ENCODE measurements at regions of chr7 and their contacts with region 1.

Region 1: DNA sequence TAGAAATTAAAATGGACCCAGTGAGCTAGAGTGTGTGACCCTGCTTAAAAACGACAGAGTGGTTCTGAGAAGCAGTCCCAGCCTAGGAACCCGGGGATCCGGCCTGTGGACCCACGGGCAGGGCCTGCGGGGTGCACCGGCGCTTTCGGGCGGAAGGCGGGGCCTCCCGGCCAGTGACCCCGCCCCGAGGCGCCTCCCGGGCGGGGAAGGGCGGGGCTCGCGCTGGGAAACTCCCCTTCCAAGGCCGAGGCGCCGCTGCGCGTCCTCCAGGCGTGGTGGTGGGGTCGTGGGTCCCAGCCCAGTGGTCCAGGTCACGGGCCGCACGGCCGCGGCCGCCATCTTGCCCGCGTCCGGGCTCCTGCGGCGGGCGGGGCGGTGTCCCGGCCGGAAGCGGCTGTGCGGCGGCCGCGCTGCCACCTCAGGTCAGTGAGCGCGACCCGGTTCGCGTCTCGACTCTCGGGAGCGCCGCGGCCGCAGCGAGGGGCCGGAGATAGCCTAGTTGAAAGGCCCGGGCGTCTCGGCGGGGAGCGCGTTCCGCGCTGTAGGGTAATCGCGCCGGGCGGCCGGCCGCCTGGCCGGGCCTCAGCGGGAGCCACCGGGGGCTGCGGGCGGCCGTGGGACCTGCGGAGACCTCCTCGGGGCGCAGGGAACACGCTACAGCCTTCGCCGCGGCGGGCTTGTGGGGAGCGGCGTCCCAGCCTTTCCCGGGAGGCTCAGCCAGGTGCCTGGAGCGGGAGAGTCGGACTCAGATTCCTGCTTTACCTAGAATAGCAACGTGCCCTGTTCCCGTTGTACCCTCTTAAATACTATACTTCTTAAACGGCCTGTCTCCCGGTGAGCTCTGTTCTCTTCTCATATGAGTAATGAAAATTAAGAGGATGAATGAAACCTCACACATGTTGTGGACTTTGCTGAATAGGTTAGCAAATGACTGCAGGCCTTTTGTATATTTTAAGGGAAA is at the start of gene MIOS:
- DNase-seq: peak; percentile 85
- H3K4me3 Mint-ChIP-seq: peak within 1 kb of the TSS; percentile 81
- H3K27ac Mint-ChIP-seq: peak within 1 kb of the TSS; percentile 75
- H3K4me1 Mint-ChIP-seq: peaks cover 29% of the 10 kb centered on the region
- H3K27me3 Mint-ChIP-seq: no peaks in the 10 kb centered on the region
- total RNA-seq, gene MIOS: 37.2 to 37.7 TPM

Region 2: DNA sequence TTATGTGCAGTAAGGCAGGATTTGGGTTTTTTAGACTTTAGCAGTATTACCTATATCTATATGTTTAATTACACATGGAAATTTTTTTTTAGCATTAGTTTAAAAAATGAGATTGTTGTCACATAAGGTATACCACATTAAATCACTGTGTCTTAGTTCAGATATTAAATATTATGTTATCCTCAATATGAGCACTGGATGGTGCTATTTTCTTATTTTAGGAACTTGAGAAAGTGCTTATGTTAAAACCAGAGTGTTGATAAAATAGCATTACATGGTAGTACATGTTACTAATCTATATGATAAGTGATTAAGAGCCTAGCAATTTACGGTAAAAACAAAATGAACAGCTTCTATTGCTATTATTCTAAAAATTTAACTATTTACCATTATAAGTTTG is 28.5 kb after region 1 on chr7:
- CTCF ChIA-PET with region 1: no interaction called
- POLR2A ChIA-PET with region 1: no interaction called
- intact Hi-C with region 1: loop called (anchors 1 kb)
- DNase-seq: no peak
- H3K4me3 Mint-ChIP-seq: no peak overlapping the region
- H3K27ac Mint-ChIP-seq: no peak overlapping the region
- H3K4me1 Mint-ChIP-seq: no peaks in the 10 kb centered on the region
- H3K27me3 Mint-ChIP-seq: no peaks in the 10 kb centered on the region

Region 3: DNA sequence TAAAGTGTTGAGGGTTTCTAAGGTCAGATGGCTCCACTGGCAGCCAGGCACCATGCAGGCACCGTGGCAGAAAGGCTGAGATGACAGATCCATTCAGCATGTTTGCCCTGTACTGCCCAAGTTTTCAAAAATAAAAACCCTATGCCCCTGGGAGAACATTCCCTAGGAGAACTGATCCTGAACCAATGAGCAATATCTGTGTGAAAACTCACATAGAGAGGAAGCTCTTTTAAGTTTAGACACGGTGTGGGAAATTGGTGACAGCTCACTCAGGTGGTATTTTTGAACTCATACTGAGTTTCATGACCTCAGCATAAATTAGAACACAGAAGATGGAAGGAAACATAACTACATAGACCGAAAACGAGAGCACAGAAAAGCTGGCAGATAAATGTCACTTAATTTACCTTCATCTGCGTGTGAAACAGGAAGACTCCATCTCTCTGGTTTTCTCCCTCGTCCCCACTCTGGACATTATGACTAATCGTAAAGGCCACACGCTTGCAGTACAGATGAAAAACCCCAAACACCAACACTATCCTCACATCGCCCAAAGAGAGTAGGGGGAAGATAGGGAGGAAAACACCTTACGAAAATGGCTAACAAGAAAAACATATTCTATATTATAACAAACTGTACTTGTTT is 567.3 kb after region 1 on chr7:
- CTCF ChIA-PET with region 1: no interaction called
- POLR2A ChIA-PET with region 1: no interaction called
- intact Hi-C with region 1: loop called (anchors 1 kb)
- DNase-seq: peak; percentile 66
- H3K4me3 Mint-ChIP-seq: peak overlapping the region; percentile 35
- H3K27ac Mint-ChIP-seq: peak overlapping the region; percentile 71
- H3K4me1 Mint-ChIP-seq: peaks cover 60% of the 10 kb centered on the region
- H3K27me3 Mint-ChIP-seq: no peaks in the 10 kb centered on the region

Measured in activated CD4-positive, alpha-beta memory T cell treated with anti-CD3 and anti-CD28 coated beads for 36 hours (primary cell).